Activated CD4-positive, alpha-beta T cell treated with anti-CD3 and anti-CD28 coated beads for 36 hours (primary cell): ENCODE measurements at regions of chr2 and their contacts with region 1.

Region 1: DNA sequence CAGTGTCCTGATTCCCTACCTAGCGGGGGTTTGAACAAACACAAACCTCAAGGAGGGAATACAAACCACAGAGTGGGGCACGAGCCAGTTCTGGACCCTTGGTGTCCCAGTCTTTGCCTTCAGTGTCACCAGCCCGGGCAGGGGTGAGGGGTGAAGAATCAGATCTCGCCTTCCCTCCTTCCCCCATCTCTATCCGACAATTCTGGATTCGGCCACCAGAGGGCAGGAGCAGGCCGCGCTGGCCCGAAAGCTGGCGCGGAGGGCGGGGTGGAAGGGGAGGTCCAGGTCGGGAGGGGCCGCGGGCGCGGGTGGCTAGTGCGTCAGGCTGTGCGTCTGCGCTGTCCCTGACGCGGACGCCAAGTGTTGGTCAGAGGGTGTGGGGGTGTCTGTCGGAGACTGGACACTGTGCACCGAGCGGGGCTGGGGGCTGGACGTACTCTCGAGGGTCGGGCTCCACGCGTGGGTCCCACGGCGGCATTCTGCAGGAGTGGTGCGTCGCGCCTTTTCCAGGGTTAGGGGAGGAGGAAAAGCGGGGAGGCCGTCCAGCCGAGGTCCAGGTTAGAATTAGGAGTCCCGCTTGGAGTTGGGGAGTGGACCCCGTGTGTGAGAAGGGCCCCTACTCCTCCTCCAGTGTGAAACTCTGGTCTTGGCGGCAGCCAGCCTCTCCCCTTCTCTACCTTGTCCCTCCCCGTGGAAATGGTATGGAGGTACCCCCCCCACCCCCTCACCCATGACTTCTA is 2.9 kb upstream of the CRYBA2 start:
- DNase-seq: peak; percentile 91
- ATAC-seq: peak; percentile 81
- H3K4me3 Mint-ChIP-seq: no peak overlapping the region
- H3K27ac Mint-ChIP-seq: no peak overlapping the region
- H3K4me1 Mint-ChIP-seq: no peaks in the 10 kb centered on the region
- H3K27me3 Mint-ChIP-seq: peaks cover 69% of the 10 kb centered on the region

Region 2: GRCh38 chr2:218870984-218871344 is 125.2 kb before region 1 on chr2:
- CTCF ChIA-PET with region 1: interaction called, 14 read pairs
- POLR2A ChIA-PET with region 1: no interaction called
- intact Hi-C with region 1: loop called in 1 of 2 experiments (anchors 5 kb)
- DNase-seq: no peak
- ATAC-seq: no peak
- H3K4me3 Mint-ChIP-seq: peak overlapping the region; percentile 44
- H3K27ac Mint-ChIP-seq: no peak overlapping the region
- H3K4me1 Mint-ChIP-seq: peaks cover 17% of the 10 kb centered on the region
- H3K27me3 Mint-ChIP-seq: peaks cover 53% of the 10 kb centered on the region

Region 3: GRCh38 chr2:218959141-218959731 is 36.9 kb before region 1 on chr2 and contains the start of gene CDK5R2:
- CTCF ChIA-PET with region 1: interaction called, 17 read pairs
- POLR2A ChIA-PET with region 1: no interaction called
- intact Hi-C with region 1: loop called in 1 of 2 experiments (anchors 2 kb)
- DNase-seq: peak; percentile 89
- ATAC-seq: peak; percentile 98
- H3K4me3 Mint-ChIP-seq: peak within 1 kb of the TSS; percentile 43
- H3K27ac Mint-ChIP-seq: no peak within 1 kb of the TSS
- H3K4me1 Mint-ChIP-seq: peaks cover 11% of the 10 kb centered on the region
- H3K27me3 Mint-ChIP-seq: peaks cover 68% of the 10 kb centered on the region
- total RNA-seq, gene CDK5R2: not detected

Region 4: GRCh38 chr2:219029829-219030165 is 33.7 kb after region 1 on chr2:
- CTCF ChIA-PET with region 1: interaction called, 8 read pairs
- POLR2A ChIA-PET with region 1: interaction called, 3 read pairs
- intact Hi-C with region 1: loop called in 1 of 2 experiments (anchors 1 kb)
- DNase-seq: peak; percentile 88
- ATAC-seq: peak; percentile 98
- H3K4me3 Mint-ChIP-seq: no peak overlapping the region
- H3K27ac Mint-ChIP-seq: no peak overlapping the region
- H3K4me1 Mint-ChIP-seq: no peaks in the 10 kb centered on the region
- H3K27me3 Mint-ChIP-seq: peaks cover 11% of the 10 kb centered on the region

Region 5: GRCh38 chr2:219119422-219120043 is 123.4 kb after region 1 on chr2:
- CTCF ChIA-PET with region 1: interaction called, 20 read pairs
- POLR2A ChIA-PET with region 1: no interaction called
- intact Hi-C with region 1: no loop called
- DNase-seq: peak; percentile 82
- ATAC-seq: peak; percentile 72
- H3K4me3 Mint-ChIP-seq: no peak overlapping the region
- H3K27ac Mint-ChIP-seq: no peak overlapping the region
- H3K4me1 Mint-ChIP-seq: peaks cover 6% of the 10 kb centered on the region
- H3K27me3 Mint-ChIP-seq: no peaks in the 10 kb centered on the region